ENCODE measurements at regions of chr16 and their contacts with region 1.

Region 1: GRCh38 chr16:85316321-85316919 is 204.1 kb upstream of the CIBAR2 start:
- DNase-seq: peak; percentile 54
- H3K4me3 Mint-ChIP-seq: no peak overlapping the region
- H3K27ac Mint-ChIP-seq: no peak overlapping the region
- H3K4me1 Mint-ChIP-seq: peaks cover 9% of the 10 kb centered on the region
- H3K27me3 Mint-ChIP-seq: no peaks in the 10 kb centered on the region
- CTCF ChIP-seq: peak; percentile 84

Region 2: DNA sequence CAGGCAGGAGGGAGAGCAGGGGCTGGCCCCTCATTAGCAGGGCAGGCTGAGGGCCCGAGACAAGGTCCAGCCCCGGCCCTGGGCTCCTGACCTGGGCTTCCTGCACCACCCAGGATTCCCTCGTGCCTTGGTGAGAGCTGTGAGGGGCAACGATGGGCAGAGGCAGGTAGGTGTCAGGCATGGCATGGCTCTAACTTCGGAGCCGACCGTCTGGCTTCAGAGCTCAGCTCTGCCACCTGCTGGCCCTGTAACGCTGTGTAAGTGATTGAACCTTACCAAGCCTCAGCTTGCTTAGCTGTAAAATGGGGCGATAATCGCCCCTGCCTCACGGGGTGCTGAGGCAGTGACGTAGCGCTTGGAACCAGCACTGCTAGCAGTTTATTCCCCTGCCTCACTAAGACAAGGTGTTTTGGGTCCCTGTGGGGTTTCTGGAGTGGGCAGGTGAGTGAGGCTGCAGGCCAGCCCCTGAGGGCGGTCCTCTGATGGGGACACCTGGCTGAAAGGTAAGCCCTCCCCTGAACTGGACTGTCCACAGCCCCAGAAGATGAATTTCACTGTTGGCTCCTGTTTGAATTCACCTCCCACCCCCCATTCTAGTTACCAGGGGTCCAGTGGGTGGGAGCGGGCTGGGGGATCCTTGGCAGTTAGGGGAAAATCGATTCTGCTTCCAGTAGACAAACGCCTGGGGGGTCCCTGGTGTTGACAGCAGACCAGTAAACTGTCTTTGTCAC is 111.9 kb after region 1 on chr16:
- CTCF ChIA-PET with region 1: no interaction called
- POLR2A ChIA-PET with region 1: no interaction called
- intact Hi-C with region 1: loop called (anchors 2 kb)
- DNase-seq: peak; percentile 49
- H3K4me3 Mint-ChIP-seq: no peak overlapping the region
- H3K27ac Mint-ChIP-seq: no peak overlapping the region
- H3K4me1 Mint-ChIP-seq: no peaks in the 10 kb centered on the region
- H3K27me3 Mint-ChIP-seq: no peaks in the 10 kb centered on the region
- CTCF ChIP-seq: peak; percentile 59